ENCODE measurements at regions of chr7 and their contacts with region 1.

Region 1: DNA sequence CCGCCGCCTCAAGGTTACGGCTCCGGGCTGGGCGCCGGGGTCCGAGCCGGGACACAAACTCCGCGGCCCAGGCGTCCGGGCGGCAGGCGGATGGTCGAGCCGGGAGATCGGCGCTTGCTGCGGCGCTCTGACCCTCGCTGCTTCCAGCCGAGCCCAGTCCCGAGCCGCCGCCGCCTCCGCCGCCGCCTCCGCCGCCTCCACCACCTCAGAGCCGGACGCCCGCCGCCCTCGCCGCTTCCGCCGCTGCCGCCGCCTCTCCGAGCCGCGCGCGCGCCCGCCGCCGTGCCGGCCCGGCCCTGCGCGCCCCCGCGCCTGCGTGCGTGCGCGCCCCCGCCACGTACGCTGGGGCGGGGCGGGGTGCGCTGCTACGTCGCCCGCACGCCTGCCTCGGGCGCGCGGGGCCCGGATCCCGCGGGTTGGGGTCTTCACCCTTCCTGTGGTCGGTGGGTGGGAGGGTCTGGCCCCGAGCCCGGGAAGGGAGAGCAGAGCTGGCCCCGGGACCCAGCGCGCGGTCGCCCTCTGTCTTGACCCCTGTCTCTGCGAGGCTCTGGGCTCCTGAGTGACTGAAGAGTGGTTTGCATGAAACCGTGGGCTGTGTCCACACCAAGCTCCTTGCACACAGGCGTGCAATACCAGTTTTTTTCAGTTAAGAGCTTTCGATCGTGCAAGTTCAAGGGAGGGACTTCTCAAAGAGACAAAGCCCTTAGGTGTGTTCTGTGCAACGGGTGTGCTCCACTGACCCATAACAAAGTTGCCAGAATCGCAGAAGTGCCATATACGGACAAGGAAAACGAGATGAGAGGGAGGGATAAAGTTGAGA is at the start of gene SMURF1:
- DNase-seq: peak; percentile 69
- H3K4me3 Mint-ChIP-seq: peak within 1 kb of the TSS; percentile 90
- H3K27ac Mint-ChIP-seq: peak within 1 kb of the TSS; percentile 75
- H3K4me1 Mint-ChIP-seq: peaks cover 38% of the 10 kb centered on the region
- H3K27me3 Mint-ChIP-seq: no peaks in the 10 kb centered on the region
- total RNA-seq, gene SMURF1: 10.1 to 11.1 TPM

Region 2: DNA sequence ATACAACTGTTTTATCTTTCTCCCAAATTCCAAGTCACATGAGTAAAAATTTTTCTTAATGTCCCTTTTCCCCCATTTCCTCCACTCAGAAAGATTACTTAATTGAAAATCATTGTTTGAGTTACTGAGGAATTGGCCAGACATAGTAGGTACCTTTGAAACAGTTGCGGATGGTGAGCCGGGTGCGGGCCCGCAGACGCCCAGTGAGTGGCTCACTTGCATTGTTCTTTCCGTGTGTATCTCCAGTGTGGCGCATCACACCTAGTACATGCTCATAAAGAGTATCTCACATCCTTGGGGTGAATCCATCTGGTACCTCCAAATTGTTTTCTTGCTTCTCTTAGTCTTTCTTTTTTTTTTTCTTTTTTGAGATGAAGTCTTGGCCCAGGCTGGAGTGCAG is 251.5 kb before region 1 on chr7:
- CTCF ChIA-PET with region 1: no interaction called
- intact Hi-C with region 1: no loop called
- DNase-seq: no peak
- H3K4me3 Mint-ChIP-seq: no peak overlapping the region
- H3K27ac Mint-ChIP-seq: no peak overlapping the region
- H3K4me1 Mint-ChIP-seq: peaks cover 7% of the 10 kb centered on the region
- H3K27me3 Mint-ChIP-seq: no peaks in the 10 kb centered on the region

Region 3: DNA sequence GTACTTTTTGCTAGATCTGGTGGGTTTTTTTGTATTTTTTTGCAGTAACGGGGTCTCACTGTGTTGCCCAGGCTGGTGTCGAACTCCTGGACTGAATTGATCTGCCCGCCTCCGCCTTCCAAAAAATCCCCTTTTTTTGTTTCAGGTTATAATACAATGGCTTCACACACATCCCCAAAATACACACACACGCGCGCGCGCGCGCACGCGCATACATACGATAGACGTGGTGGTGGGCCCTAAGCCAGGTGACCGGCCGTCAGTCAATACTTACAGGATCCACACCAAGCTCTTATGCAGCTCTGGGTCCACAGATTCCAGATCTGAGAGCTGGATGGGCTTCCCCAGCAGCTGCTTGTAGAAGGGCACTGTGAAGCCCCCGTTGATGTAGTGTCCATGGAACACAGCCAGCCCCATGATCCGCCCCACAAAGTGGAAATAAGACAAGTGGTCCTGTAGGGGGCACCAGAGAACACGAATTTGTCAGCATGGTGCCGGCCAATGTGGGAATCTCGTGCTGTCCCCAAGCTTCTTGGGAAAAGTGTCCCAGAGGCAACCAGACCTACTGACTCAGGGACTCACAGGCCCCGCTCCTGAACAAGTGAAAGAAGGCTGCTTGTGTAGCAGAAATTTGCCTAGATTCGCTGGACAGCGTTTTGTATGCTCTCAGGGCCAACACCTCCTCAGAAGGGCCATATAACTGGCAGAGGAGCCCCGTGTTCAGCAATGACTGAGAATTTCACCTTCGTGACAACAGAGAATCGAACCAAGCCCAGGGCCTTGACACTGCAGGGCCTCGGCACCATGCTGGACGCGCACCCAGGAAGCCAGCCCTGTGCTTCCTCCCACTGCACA is 103.7 kb before region 1 on chr7:
- CTCF ChIA-PET with region 1: interaction called, 3 read pairs
- intact Hi-C with region 1: loop called (anchors 2 kb)
- DNase-seq: peak; percentile 76
- H3K4me3 Mint-ChIP-seq: no peak overlapping the region
- H3K27ac Mint-ChIP-seq: peak overlapping the region; percentile 80
- H3K4me1 Mint-ChIP-seq: no peaks in the 10 kb centered on the region
- H3K27me3 Mint-ChIP-seq: no peaks in the 10 kb centered on the region

Region 4: GRCh38 chr7:99102809-99103690 is 41.0 kb before region 1 on chr7:
- CTCF ChIA-PET with region 1: interaction called, 3 read pairs
- intact Hi-C with region 1: loop called (anchors 1 kb)
- DNase-seq: peak; percentile 52
- H3K4me3 Mint-ChIP-seq: no peak overlapping the region
- H3K27ac Mint-ChIP-seq: peak overlapping the region; percentile 61
- H3K4me1 Mint-ChIP-seq: peaks cover 60% of the 10 kb centered on the region
- H3K27me3 Mint-ChIP-seq: no peaks in the 10 kb centered on the region

Region 5: GRCh38 chr7:99325545-99326407 is 181.7 kb after region 1 on chr7 and contains the start of gene ARPC1A:
- CTCF ChIA-PET with region 1: no interaction called
- intact Hi-C with region 1: loop called (anchors 5 kb)
- DNase-seq: peak; percentile 90
- H3K4me3 Mint-ChIP-seq: peak within 1 kb of the TSS; percentile 80
- H3K27ac Mint-ChIP-seq: peak within 1 kb of the TSS; percentile 88
- H3K4me1 Mint-ChIP-seq: peaks cover 41% of the 10 kb centered on the region
- H3K27me3 Mint-ChIP-seq: no peaks in the 10 kb centered on the region
- total RNA-seq, gene ARPC1A: 41.5 to 47.7 TPM

Region 6: DNA sequence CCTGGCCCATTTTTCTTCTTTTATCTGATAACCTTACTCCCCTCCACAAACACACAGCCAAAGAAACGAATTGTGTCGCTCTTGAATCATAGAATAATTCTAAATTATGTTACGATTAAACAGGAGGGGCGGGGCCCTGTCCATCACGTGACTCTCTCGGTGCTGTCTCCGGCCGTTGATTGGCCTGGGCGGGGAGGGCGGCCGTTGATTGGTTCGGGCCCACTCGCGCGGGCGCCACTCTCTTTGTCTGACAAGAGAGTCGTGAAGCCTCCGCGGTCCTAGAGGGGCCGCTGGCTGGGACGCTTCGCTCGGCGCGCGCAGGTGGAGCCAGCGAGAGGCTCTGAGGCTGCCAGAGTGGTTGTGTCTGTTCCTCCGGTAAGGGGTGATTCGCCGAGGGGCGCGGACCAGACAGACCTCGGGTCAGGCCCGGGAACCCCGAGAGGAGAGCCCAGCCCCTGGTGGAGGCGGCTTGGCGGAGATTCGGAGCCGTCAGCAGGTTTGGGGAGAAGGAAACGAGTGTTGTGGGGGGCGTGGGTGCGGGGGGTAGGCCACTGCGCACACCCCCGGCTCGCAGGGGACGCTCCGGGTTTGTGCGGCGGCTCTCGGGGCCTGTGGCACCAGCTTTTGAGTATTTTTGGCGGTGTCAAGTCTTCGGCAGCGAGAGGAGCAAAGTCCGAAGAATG is 328.6 kb after region 1 on chr7 and contains the start of gene ZNF789:
- CTCF ChIA-PET with region 1: no interaction called
- intact Hi-C with region 1: loop called (anchors 2 kb)
- DNase-seq: peak; percentile 99
- H3K4me3 Mint-ChIP-seq: peak within 1 kb of the TSS; percentile 95
- H3K27ac Mint-ChIP-seq: peak within 1 kb of the TSS; percentile 83
- H3K4me1 Mint-ChIP-seq: peaks cover 32% of the 10 kb centered on the region
- H3K27me3 Mint-ChIP-seq: no peaks in the 10 kb centered on the region
- total RNA-seq, gene ZNF789: 8.0 to 9.8 TPM

Measured in activated naive CD4-positive, alpha-beta T cell treated with anti-CD3 and anti-CD28 coated beads for 36 hours (primary cell).